Natural killer cell (primary cell): ENCODE measurements at regions of chr19 and their contacts with region 1.

Region 1: DNA sequence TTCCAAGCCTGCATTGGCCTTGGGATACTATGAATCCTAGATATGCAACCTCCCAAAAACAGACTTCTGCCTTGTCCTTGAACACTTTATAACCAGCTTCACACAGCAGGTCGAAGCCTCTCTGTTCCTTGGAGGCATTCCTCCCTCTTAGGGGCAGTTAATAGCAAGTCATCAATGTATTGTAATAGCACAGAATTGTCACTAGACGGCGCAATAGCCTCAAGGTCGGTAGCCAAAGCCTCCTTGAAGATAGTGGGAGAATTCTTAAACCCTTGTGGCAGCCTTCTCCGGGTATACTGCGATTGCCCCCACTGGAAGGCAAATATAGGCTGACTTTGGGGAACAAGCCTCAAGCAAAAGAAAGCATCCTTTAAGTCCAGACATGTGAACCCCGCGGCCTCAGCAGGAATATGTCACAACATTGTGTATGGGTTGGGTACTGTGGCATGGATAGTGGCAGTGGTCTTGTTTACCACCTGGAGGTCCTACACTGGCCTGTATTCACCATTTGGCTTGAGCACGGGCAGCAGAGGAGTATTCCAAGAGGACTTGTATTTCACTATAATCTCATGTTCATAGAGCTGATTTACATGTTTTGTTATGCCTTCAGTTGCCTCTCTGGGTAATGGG is 61.1 kb downstream of the ZNF431 start:
- DNase-seq: peak in 1 of 2 donors; percentile 76
- ATAC-seq: peak; percentile 50 to 71 (median 67)
- H3K4me3 ChIP-seq: no peak overlapping the region
- H3K4me3 Mint-ChIP-seq: no peak overlapping the region
- H3K27ac ChIP-seq: no peak overlapping the region
- H3K27ac Mint-ChIP-seq: no peak overlapping the region
- H3K4me1 ChIP-seq: no peaks in the 10 kb centered on the region
- H3K4me1 Mint-ChIP-seq: peaks cover 0 to 4% of the 10 kb centered on the region in 2 donors
- H3K27me3 ChIP-seq: no peaks in the 10 kb centered on the region
- H3K27me3 Mint-ChIP-seq: peaks cover 0 to 4% of the 10 kb centered on the region in 2 donors
- CTCF ChIP-seq: peak; percentile 74

Region 2: DNA sequence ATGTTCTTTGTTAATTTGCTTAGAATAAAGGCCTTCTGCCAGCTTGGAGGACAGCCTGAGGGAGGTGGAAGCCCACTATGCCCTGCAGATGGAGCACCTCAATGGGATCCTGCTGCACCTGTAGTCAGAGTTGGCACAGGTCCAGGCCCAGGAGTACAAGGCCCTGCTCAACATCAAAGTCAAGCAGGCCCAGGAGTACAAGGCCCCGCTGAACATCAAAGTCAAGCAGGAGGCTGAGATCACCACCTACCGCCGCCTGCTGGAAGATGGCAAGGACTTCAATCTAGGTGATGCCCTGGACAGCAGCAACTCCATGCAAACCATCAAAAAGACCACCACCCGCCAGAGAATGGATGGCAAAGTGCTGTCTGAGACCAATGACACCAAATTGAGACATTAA is 238.2 kb before region 1 on chr19:
- intact Hi-C with region 1: no loop called
- DNase-seq: peak in 1 of 2 donors; percentile 29
- ATAC-seq: no peak
- H3K4me3 ChIP-seq: no peak overlapping the region
- H3K4me3 Mint-ChIP-seq: no peak overlapping the region
- H3K27ac ChIP-seq: no peak overlapping the region
- H3K27ac Mint-ChIP-seq: no peak overlapping the region
- H3K4me1 ChIP-seq: no peaks in the 10 kb centered on the region
- H3K4me1 Mint-ChIP-seq: no peaks in the 10 kb centered on the region
- H3K27me3 ChIP-seq: no peaks in the 10 kb centered on the region
- H3K27me3 Mint-ChIP-seq: no peaks in the 10 kb centered on the region
- CTCF ChIP-seq: no peak

Region 3: DNA sequence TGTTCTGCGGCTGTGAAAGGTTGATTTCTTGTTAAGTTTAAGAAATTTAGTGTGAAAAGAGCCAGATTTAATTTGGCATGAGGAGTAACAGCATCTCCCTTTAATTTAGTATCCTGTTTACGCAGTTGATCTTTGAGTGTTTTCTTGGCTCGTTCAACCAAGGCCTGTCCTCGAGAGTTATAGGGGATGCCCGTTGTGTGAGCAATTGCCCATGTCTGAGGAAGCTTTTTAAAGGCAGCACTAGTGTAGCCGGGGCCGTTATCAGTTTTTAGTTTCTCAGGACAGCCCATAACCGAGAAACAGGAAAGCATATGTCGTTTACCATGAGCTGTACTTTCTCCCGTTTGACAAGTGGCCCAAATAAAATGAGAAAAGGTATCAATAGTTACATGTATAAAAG is 680.5 kb after region 1 on chr19:
- intact Hi-C with region 1: loop called (anchors 10 kb)
- DNase-seq: no peak
- ATAC-seq: no peak
- H3K4me3 ChIP-seq: no peak overlapping the region
- H3K4me3 Mint-ChIP-seq: no peak overlapping the region
- H3K27ac ChIP-seq: no peak overlapping the region
- H3K27ac Mint-ChIP-seq: no peak overlapping the region
- H3K4me1 ChIP-seq: no peaks in the 10 kb centered on the region
- H3K4me1 Mint-ChIP-seq: no peaks in the 10 kb centered on the region
- H3K27me3 ChIP-seq: no peaks in the 10 kb centered on the region
- H3K27me3 Mint-ChIP-seq: peaks cover 2 to 7% of the 10 kb centered on the region in 2 donors
- CTCF ChIP-seq: no peak